ENCODE measurements at regions of chr4 and their contacts with region 1.

Region 1: GRCh38 chr4:94406668-94407437 is 44.9 kb upstream of the PDLIM5 start:
- DNase-seq: peak; percentile 62
- ATAC-seq: peak; percentile 57

Region 2: GRCh38 chr4:94595879-94596483 is 189.1 kb after region 1 on chr4:
- intact Hi-C with region 1: loop called (anchors 5 kb)
- DNase-seq: no peak
- ATAC-seq: no peak